ENCODE measurements at regions of chrX and their contacts with region 1.

Region 1: GRCh38 chrX:132924426-132924825 is 34.0 kb downstream of the HS6ST2 start:
- DNase-seq: no peak

Region 2: GRCh38 chrX:132909643-132910042 is 14.8 kb before region 1 on chrX:
- intact Hi-C with region 1: loop called in 1 of 2 experiments (anchors 1 kb)
- DNase-seq: no peak

Region 3: DNA sequence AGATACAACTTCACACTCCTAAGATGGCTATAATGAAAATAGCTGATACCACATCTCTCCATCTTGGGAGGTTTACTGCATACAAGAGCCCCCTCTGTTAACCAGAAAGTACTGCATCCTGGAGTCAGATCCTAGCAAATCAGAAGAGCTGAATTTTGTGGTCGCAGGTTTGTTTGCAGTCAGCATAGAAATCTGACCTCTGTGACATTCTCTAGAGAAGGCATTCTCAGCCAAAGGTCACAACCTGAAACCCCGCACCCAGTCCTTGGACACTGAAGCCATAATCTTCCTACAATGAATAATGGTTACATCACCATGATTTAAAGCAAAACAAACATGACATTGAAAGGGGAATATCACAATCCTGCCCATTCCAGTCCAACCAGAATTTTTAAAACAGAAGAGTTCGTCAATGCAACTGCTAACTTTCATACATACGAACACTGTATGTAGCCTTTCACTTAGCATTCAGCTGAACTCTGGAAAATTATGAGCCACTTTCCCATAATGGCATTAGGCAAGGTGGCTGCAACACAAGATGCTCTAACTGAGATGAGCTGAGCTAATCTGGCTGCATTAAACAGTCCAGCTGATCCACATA is 16.4 kb after region 1 on chrX:
- intact Hi-C with region 1: no loop called
- DNase-seq: no peak

Region 4: GRCh38 chrX:133033010-133033409 is 108.6 kb after region 1 on chrX:
- intact Hi-C with region 1: no loop called
- DNase-seq: no peak